GM18951 (cell line): ENCODE measurements at regions of chr20 and their contacts with region 1.

Region 1: DNA sequence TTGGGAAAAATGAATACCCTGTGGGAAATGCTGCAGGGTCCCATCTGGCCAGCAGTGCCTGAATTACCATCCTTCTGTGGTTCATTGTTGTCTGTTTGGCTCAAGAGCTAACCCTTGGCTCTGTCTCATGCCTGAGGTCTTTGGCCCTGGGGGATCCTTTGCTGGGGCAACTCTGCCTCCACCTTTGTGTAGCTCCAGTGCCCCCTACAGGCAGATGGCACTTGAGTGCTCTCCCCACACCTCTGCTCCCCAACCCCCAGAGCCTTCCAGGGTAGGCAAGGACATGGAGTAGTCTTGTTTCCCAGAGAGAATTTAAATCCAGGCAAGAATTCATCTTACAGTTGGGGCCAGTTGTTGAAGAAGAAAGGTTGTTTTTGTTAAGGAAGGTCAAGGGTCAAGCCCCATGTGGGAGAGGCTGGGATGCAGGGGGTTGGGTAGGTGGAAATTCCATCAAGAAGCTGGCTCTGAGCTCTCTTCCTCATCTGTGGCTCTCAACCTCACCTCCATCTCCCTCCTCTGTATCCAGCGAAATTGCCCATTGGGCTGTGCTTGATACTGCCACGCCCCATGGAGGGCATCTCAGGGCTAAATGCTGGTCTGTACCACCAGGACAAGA is 44.2 kb downstream of the ZNF831 start:
- POLR2A ChIP-seq: no peak

Region 2: DNA sequence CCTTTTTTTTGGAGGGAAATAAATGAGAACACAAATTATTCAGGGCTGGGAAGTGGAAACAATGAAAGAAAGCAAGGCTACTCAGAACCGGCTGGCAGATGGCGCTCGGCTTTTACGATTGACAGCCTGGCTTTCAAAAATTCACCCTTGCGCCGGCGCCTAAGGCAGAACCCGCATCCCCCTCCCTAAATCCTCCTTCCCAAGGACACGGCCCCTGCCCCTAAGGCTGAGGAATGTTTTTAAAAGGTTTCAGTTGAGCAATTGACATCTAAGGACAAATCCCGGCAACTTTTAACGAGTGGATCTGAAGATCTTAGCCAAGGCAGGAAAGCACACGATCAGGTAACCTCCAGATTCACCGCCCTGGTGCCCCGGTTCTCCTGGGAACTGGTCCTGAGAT is 339.1 kb before region 1 on chr20:
- in situ Hi-C with region 1: loop called (anchors 5 kb)
- POLR2A ChIP-seq: no peak

Region 3: DNA sequence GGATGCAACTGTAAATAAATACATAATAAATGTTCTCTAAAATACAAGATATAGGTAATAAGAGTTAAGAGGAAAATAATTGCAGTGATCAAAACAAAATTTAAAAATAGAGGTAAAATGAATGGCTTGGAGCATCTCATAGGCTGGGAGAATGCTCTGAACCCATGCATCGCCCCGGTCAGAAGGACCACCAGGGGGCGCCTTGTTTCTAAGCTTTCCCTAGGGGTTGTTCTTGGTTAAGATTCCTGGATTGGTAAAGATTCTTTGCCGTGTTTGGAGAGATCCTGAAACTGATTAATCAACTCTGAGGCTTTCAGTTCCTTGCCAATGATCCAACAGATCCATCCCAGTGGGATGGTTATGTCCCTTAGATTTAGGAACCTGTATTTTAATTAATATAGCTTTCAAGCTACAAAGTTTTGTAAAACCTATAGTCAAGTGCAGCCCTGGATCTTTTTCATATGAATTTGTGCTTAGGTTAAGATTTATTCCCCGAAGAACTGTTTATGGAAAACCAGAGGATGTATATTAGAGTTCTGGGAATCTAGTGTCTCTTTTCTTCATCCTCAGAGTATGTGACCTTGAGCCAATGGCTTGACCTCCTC is 119.9 kb before region 1 on chr20:
- in situ Hi-C with region 1: loop called (anchors 5 kb)
- POLR2A ChIP-seq: no peak